ENCODE measurements at regions of chr7 and their contacts with region 1.

Region 1: GRCh38 chr7:73451780-73452398 is 18.3 kb downstream of the FZD9 start:
- DNase-seq: peak; percentile 42
- H3K4me3 ChIP-seq: no peak overlapping the region
- H3K27ac ChIP-seq: no peak overlapping the region
- H3K27me3 ChIP-seq: no peaks in the 10 kb centered on the region
- CTCF ChIP-seq: peak; percentile 99

Region 2: DNA sequence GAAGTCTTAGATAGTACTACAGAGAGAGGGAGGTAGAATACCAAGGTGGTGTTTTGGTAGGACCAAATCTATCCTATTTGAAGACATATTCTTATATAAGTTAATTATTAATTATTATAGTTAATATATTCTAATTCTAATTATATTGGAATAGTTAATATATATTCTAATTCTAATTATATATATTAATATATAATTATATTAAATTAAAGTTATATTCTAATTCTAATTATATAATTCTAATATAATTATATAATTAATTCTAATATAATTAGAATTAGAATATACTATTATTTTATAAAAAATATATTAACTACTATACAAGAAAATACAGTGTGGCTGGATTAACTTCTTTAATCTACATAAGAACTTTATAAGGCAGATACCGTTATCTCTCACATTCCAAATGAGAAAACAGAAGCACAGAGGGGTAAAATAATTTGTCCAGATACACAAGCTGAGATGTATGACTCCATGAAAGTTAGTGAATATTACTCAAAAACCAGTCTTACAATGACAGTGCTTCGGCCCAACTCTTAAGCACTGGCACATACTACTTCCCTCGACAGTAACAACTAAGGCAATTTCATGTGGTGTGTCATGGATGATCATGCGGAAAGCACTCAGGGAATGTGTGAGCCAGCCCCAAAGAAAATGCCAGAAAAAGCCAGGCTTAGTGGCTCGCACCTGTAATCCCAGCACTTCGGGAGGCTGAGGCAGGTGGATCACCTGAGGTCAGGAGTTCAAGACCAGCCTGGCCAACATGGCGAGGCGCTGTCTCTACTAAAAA is 666.5 kb before region 1 on chr7:
- CTCF ChIA-PET with region 1: no interaction called
- POLR2A ChIA-PET with region 1: no interaction called
- DNase-seq: no peak
- H3K4me3 ChIP-seq: no peak overlapping the region
- H3K27ac ChIP-seq: no peak overlapping the region
- H3K27me3 ChIP-seq: no peaks in the 10 kb centered on the region
- CTCF ChIP-seq: no peak

Region 3: GRCh38 chr7:73316521-73316920 is 135.4 kb before region 1 on chr7:
- CTCF ChIA-PET with region 1: interaction called, 11 read pairs
- POLR2A ChIA-PET with region 1: no interaction called
- DNase-seq: no peak
- H3K4me3 ChIP-seq: no peak overlapping the region
- H3K27ac ChIP-seq: no peak overlapping the region
- H3K27me3 ChIP-seq: peaks cover 2% of the 10 kb centered on the region
- CTCF ChIP-seq: no peak

Region 4: GRCh38 chr7:73329861-73330581 is 121.9 kb before region 1 on chr7:
- CTCF ChIA-PET with region 1: interaction called, 42 read pairs
- POLR2A ChIA-PET with region 1: no interaction called
- DNase-seq: peak; percentile 8
- H3K4me3 ChIP-seq: no peak overlapping the region
- H3K27ac ChIP-seq: peak overlapping the region; percentile 31
- H3K27me3 ChIP-seq: peaks cover 8% of the 10 kb centered on the region
- CTCF ChIP-seq: no peak

Region 5: DNA sequence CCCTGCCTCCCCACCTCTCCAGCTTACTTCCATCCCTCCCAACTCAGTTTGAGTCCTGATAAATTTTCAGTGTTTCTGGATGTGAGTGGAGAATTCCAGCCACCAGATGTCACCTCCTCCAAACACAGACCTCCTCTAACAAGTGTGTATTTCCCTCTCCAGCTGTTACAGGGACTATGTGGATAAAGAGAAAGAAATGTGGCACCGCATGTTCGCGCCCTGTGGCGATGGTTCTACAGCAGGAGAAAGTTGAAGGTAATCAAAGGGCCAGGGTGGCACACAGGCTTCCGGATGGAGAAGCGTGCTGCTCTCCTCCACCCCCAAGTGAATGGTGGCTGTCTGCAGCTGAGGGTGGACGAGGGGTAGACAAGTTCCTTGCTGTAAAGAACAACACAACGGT is 109.2 kb before region 1 on chr7:
- CTCF ChIA-PET with region 1: interaction called, 27 read pairs
- POLR2A ChIA-PET with region 1: no interaction called
- DNase-seq: peak; percentile 33
- H3K4me3 ChIP-seq: no peak overlapping the region
- H3K27ac ChIP-seq: no peak overlapping the region
- H3K27me3 ChIP-seq: peaks cover 9% of the 10 kb centered on the region
- CTCF ChIP-seq: peak; percentile 76

Measured in AG04450 (cell line).